IMR-90 (cell line): ENCODE measurements at regions of chr3 and their contacts with region 1.

Region 1: DNA sequence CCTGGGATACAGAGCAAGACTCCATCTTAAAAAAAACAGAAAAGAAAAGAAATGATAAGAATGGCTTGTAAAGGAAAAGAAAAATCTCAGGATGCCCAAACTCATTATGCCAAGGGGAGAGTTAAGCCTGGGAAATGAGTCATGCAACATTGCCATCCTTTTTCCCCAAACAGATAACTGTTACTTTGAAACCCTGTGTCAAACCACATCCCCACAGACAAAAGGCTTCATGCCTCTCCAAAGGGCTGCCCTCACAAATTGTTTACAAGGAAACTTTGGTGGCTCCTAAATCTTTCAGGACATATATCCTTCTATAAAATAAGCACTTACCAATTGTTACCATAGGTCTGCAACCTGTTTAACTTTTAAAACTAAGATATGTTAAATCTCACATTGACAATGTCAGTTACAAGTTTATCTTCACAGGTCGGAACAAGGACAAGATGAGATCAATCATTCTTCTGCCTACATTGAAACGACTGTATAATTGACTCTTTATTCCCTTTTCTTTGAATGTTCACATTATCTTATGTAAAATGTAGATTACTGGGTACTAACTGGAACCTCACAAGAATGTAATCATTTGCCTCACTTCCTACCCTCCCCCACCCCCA is 18.6 kb upstream of the SENP7 start:
- DNase-seq: no peak
- ATAC-seq: no peak
- H3K4me3 ChIP-seq: no peak overlapping the region
- H3K27ac ChIP-seq: no peak overlapping the region
- H3K4me1 ChIP-seq: peaks cover 2% of the 10 kb centered on the region
- H3K27me3 ChIP-seq: peaks cover 2% of the 10 kb centered on the region; the same call in 1 of the 2 replicates
- CTCF ChIP-seq: no peak
- POLR2A ChIP-seq: no peak
- RAD21 ChIP-seq: no peak

Region 2: DNA sequence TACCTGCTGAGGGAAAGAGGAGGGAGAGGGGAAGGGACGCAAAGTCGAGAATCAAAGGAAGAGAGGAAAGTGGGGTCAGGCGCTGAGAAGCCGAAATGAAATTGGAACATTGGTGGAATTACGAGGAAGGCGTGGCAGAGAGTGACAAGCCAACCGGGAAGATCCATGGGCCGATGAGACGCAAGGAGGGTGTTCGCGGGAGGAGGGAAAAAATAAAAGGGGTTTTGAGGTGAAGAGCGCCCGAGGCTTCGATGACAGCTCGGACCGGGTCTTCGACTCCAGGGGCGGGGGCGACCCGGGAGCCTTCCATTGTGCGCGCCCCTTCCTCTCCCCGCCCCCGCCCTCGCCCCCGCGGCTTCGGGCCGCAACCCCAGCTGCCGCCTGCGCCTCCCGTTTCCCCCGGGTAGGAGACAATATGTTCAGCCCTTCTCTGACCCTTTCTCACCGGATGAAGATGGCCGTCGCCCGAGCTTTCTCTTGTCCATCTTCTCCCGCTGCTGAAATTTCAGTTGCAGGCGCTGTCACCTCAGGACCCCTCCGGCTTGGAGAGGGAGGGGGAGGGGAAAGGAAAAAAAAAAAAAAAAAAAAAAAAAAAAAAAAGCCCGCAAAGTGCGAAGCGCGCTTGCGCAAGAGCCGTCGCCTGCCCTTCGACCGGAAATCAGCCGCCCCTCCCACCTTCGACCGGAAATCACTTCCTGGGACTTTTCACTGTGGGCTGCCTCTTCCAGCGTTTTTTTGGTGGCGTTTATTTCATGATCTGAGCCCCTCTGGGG is 18.7 kb before region 1 on chr3 and contains the start of gene SENP7:
- CTCF ChIA-PET with region 1: no interaction called
- POLR2A ChIA-PET with region 1: interaction called, 21 read pairs
- dilution Hi-C with region 1: no loop called
- in situ Hi-C with region 1: no loop called
- intact Hi-C with region 1: no loop called
- DNase-seq: peak; percentile 75
- ATAC-seq: peak; percentile 86
- H3K4me3 ChIP-seq: peak within 1 kb of the TSS; percentile 80
- H3K27ac ChIP-seq: peak within 1 kb of the TSS; percentile 98
- H3K4me1 ChIP-seq: 0 out of 2 replicates have a peak, but pooled peaks cover 2% of the 10 kb centered on the region
- H3K27me3 ChIP-seq: no peaks in the 10 kb centered on the region
- CTCF ChIP-seq: no peak
- POLR2A ChIP-seq: no peak
- RAD21 ChIP-seq: no peak
- total RNA-seq, gene SENP7: 8.4 and 14.7 TPM in 2 replicates